ENCODE measurements at regions of chr6 and their contacts with region 1.

Region 1: GRCh38 chr6:148578245-148578732 is 168.5 kb upstream of the UST start:
- DNase-seq: peak; percentile 80 to 89
- H3K4me3 ChIP-seq: no peak overlapping the region
- H3K27ac ChIP-seq: no peak overlapping the region
- H3K4me1 ChIP-seq: no peaks in the 10 kb centered on the region
- H3K27me3 ChIP-seq: no peaks in the 10 kb centered on the region
- CTCF ChIP-seq: peak; percentile 82 to 91

Region 2: DNA sequence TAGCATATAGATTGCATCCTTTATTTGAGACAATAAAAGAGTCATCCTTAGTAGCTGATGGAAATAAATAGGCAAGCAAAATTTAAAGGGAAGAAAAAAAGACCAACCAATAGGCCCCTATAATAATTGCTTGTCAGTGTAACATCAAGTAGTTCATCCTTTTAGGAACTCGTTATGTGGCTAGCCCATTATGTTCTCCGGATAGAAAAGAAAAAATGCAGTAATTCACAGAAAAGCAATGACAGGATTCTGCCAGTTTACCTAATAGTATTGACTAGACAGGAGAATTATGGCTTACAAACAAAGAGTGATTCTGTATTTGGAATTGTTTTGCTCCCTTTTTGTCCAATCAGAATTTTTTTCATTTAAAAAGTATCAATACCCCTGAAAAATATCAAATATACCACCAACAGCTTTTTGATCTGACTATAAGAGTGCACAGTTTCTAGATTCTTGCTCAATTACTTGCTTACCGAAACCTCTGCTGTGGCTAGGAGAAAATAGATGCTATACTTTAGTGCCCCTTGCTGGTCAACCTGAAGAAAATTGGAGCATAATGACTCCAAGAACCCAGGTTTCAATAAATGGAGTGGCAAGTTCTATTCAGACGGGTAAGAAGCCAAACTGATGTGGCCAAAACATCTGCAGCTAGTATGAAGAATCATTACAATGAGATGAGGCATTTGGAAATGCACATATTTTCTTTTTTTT is 327.2 kb before region 1 on chr6:
- intact Hi-C with region 1: no loop called
- DNase-seq: no peak
- H3K4me3 ChIP-seq: no peak overlapping the region
- H3K27ac ChIP-seq: peak overlapping the region; percentile 11 to 20
- H3K4me1 ChIP-seq: peaks cover 0 to 40% (median 14%) of the 10 kb centered on the region in 4 donors
- H3K27me3 ChIP-seq: no peaks in the 10 kb centered on the region
- CTCF ChIP-seq: peak; percentile 64 to 77

Region 3: DNA sequence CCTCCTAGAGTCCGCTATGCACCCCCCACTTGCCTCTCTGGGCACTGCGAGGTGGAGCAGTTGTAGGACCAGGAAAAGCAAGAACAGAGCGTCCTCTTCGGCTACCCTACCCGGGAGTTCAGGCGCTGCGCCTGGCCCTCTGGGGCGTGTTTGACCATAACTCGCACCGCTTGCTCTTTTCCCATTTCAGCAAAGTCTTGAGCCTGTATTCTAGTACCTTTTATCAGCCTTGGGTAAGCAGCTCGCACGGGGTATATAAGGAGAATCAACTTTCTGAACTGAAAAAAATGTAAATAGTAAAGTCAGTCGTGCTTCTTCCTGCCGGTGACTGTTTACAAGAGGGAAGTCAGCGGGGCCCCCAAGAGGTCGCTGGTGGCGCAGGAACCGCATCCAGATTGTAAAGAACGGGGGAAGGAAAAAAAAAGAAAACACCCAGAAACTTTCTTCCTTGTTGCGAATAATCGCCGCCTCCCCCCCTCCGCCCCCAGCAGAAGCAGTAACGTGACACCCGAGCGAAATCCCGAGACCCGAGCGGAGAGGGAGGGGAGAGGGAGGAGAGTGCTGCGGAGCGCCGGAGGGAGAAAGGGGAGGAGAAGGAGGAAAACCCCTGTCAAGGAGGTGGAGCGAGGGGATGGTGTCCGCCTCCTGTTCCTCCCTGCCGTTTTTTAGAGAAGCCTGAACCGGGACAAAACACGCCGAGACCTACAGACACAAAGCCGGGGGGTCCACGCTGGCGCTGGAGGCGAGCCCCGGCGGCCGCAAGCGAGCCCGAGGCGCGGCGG is 168.3 kb after region 1 on chr6 and contains the start of gene UST:
- intact Hi-C with region 1: loop called (anchors 10 kb)
- DNase-seq: peak; percentile 93 to 96
- H3K4me3 ChIP-seq: peak within 1 kb of the TSS; percentile 68 to 88
- H3K27ac ChIP-seq: peak within 1 kb of the TSS; percentile 85 to 87
- H3K4me1 ChIP-seq: peaks cover 0 to 25% (median 13%) of the 10 kb centered on the region in 4 donors
- H3K27me3 ChIP-seq: no peaks in the 10 kb centered on the region
- CTCF ChIP-seq: peak in 1 of 2 experiments; percentile 37